H1 (cell line): ENCODE measurements at regions of chr2 and their contacts with region 1.

Region 1: GRCh38 chr2:197086500-197086899 is 160.0 kb upstream of the PGAP1 start:
- DNase-seq: no peak
- H3K4me3 ChIP-seq: no peak overlapping the region
- H3K27ac ChIP-seq: no peak overlapping the region
- H3K4me1 ChIP-seq: no peaks in the 10 kb centered on the region
- H3K27me3 ChIP-seq: no peaks in the 10 kb centered on the region
- CTCF ChIP-seq: no peak
- EP300 ChIP-seq: no peak
- POLR2A ChIP-seq: no peak
- RAD21 ChIP-seq: no peak

Region 2: GRCh38 chr2:197075759-197076337 is 10.7 kb before region 1 on chr2:
- CTCF ChIA-PET with region 1: interaction called, 22 read pairs
- POLR2A ChIA-PET with region 1: no interaction called
- DNase-seq: no peak
- H3K4me3 ChIP-seq: no peak overlapping the region
- H3K27ac ChIP-seq: no peak overlapping the region
- H3K4me1 ChIP-seq: no peaks in the 10 kb centered on the region; a peak in 1 of 7 replicates
- H3K27me3 ChIP-seq: no peaks in the 10 kb centered on the region
- CTCF ChIP-seq: peak; percentile 20 to 54 (median 52)
- EP300 ChIP-seq: no peak
- POLR2A ChIP-seq: no peak
- RAD21 ChIP-seq: peak; percentile 74 to 80